CD4-positive, alpha-beta T cell (primary cell): ENCODE measurements at regions of chr14 and their contacts with region 1.

Region 1: DNA sequence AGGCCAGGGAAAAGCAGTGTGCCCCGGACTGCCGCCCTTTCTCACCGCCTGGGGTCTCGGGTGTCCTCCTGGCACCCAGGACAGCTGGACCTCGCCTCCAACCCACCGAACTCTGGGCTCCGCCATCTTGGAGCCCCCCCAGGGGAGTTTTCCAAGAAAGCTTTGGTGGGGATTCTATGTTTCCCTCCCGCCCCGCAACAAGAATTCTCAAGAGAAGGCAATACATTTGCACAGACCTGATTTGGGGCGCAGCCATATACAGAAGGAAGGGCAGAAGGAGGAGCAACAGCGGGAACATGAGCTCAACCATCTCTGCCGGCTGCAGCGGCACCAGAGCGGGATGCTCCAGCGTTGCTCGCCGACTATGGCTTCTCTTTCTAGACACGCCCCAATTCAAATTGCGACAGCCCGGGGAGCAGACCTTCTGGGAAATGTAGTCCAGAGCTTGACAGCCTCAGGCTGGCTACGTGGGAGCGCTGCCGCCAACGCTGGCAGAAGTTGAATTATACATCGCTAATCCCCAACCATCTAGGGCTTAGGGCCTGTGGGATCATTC is at the start of gene RDH11:
- DNase-seq: peak; percentile 63 to 94 (median 76)
- ATAC-seq: peak; percentile 96
- H3K4me3 ChIP-seq: peak within 1 kb of the TSS; percentile 87
- H3K4me3 Mint-ChIP-seq: peak within 1 kb of the TSS; percentile 88
- H3K27ac ChIP-seq: peak within 1 kb of the TSS; percentile 44 to 64
- H3K27ac Mint-ChIP-seq: peak within 1 kb of the TSS; percentile 74
- H3K4me1 ChIP-seq: peaks cover 14% of the 10 kb centered on the region
- H3K4me1 Mint-ChIP-seq: peaks cover 27% of the 10 kb centered on the region
- H3K27me3 ChIP-seq: no peaks in the 10 kb centered on the region
- H3K27me3 Mint-ChIP-seq: no peaks in the 10 kb centered on the region
- CTCF ChIP-seq: no peak
- total RNA-seq, gene RDH11: 13.6 to 14.2 TPM

Region 2: GRCh38 chr14:66507722-66508546 is 1187.5 kb before region 1 on chr14 and contains the start of gene GPHN:
- CTCF ChIA-PET with region 1: no interaction called
- POLR2A ChIA-PET with region 1: no interaction called
- intact Hi-C with region 1: loop called in 1 of 2 experiments (anchors 10 kb)
- DNase-seq: peak; percentile 71 to 95 (median 82)
- ATAC-seq: peak; percentile 89
- H3K4me3 ChIP-seq: peak within 1 kb of the TSS; percentile 90
- H3K4me3 Mint-ChIP-seq: peak within 1 kb of the TSS; percentile 99
- H3K27ac ChIP-seq: peak within 1 kb of the TSS; percentile 14 to 48
- H3K27ac Mint-ChIP-seq: peak within 1 kb of the TSS; percentile 94
- H3K4me1 ChIP-seq: peaks cover 19% of the 10 kb centered on the region
- H3K4me1 Mint-ChIP-seq: peaks cover 41% of the 10 kb centered on the region
- H3K27me3 ChIP-seq: no peaks in the 10 kb centered on the region
- H3K27me3 Mint-ChIP-seq: no peaks in the 10 kb centered on the region
- CTCF ChIP-seq: no peak
- total RNA-seq, gene GPHN: 10.0 to 10.7 TPM

Region 3: DNA sequence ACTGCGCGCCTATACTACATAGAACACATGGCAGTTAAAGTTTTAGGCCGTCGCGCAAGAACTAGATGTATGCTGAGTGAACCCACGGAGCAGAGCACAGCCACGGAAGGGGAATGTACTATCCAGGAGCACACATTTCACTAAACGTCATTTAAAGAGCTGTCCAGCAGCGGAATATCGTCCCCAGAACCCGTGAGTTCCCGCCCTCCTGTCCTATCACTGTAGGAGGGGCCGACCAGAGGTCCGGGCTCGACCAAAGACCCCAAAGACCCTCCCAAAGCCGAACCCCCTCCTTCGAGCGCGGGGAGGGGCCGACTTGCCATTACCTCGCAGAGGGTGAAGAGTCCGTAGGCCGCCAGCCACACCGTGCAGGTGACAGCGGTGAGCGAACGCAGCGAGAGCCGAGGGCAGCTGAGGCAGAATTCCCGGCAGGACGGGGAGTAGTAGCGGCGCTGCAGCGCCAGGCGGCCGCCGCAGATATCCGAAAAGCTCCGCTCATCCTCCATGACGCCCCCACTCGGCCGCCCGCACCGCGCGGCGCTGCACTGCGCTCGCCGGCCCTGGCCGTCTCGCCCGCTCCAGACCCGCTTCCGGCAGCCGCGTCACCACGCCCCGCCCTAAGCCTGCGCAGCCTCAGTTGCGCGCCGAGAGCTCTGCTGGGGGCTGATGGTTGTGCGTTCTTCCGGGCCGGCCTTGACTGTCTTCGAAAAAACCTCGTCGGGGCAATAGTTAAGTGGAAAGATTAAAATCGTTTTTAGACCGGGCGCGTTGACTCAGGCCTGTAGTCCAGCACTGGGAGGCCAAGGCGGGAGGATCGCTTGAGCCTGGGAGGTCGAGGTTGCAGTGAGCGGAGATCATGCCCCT is 95.5 kb before region 1 on chr14 and contains the start of gene PIGH:
- CTCF ChIA-PET with region 1: interaction called, 9 read pairs
- POLR2A ChIA-PET with region 1: interaction called, 26 read pairs
- intact Hi-C with region 1: loop called (anchors 1 to 5 kb)
- DNase-seq: peak; percentile 87 to 97 (median 94)
- ATAC-seq: peak; percentile 95
- H3K4me3 ChIP-seq: peak within 1 kb of the TSS; percentile 98
- H3K4me3 Mint-ChIP-seq: peak within 1 kb of the TSS; percentile 92
- H3K27ac ChIP-seq: peak within 1 kb of the TSS; percentile 56 to 83
- H3K27ac Mint-ChIP-seq: peak within 1 kb of the TSS; percentile 82
- H3K4me1 ChIP-seq: peaks cover 24% of the 10 kb centered on the region
- H3K4me1 Mint-ChIP-seq: peaks cover 49% of the 10 kb centered on the region
- H3K27me3 ChIP-seq: no peaks in the 10 kb centered on the region
- H3K27me3 Mint-ChIP-seq: no peaks in the 10 kb centered on the region
- CTCF ChIP-seq: peak; percentile 75
- total RNA-seq, gene PIGH: 66.0 to 69.7 TPM

Region 4: DNA sequence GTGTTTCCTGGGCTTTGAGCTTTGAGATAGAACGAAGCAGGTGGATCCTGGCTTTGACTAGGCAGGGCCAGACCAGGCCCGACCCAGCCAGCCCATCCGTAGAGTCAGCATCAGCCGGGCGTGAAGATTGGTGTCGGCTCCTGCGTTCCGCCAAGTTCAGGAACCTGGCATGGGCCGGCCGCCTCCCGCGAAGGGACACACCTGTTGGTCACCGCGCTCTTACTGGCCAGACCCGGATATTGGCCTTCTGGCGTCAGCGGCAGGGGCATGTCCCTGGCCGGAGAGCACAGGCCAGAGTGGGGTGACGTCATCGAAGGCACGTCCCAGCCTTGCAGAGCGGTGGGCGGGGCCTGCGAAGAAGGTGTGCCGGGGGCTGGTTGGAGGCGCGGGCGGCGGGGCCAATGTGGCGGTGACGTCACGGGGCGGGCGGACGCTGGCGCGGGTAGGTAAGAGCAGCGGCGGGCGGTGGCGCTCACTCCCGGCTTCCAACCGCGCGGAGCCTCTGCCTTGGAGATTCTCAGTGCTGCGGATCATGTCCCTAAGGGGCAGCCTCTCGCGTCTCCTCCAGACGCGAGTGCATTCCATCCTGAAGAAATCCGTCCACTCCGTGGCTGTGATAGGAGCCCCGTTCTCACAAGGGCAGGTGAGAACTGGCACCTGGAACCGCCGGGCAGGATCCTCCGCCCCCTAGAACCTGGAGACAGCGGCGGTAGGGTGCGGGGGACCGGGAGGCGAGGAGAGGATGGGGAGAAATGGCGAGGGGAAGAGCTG is 75.8 kb before region 1 on chr14 and contains the start of gene ARG2:
- CTCF ChIA-PET with region 1: interaction called, 6 read pairs
- POLR2A ChIA-PET with region 1: interaction called, 12 read pairs
- intact Hi-C with region 1: loop called (anchors 2 kb)
- DNase-seq: peak; percentile 92 to 99 (median 97)
- ATAC-seq: peak; percentile 90
- H3K4me3 ChIP-seq: peak within 1 kb of the TSS; percentile 88
- H3K4me3 Mint-ChIP-seq: peak within 1 kb of the TSS; percentile 94
- H3K27ac ChIP-seq: peak within 1 kb of the TSS; percentile 83 to 86
- H3K27ac Mint-ChIP-seq: peak within 1 kb of the TSS; percentile 83
- H3K4me1 ChIP-seq: peaks cover 21% of the 10 kb centered on the region
- H3K4me1 Mint-ChIP-seq: peaks cover 44% of the 10 kb centered on the region
- H3K27me3 ChIP-seq: peaks cover 0 to 4% of the 10 kb centered on the region in 2 experiments
- H3K27me3 Mint-ChIP-seq: no peaks in the 10 kb centered on the region
- CTCF ChIP-seq: no peak
- total RNA-seq, gene ARG2: 3.7 to 3.9 TPM

Region 5: GRCh38 chr14:67674481-67675169 is 20.8 kb before region 1 on chr14 and contains the start of gene VTI1B:
- CTCF ChIA-PET with region 1: interaction called, 19 read pairs
- POLR2A ChIA-PET with region 1: interaction called, 42 read pairs
- intact Hi-C with region 1: loop called (anchors 1 to 2 kb)
- DNase-seq: peak; percentile 57 to 89 (median 72)
- ATAC-seq: peak; percentile 91
- H3K4me3 ChIP-seq: peak within 1 kb of the TSS; percentile 83
- H3K4me3 Mint-ChIP-seq: peak within 1 kb of the TSS; percentile 91
- H3K27ac ChIP-seq: peak within 1 kb of the TSS; percentile 92 to 95
- H3K27ac Mint-ChIP-seq: peak within 1 kb of the TSS; percentile 89
- H3K4me1 ChIP-seq: peaks cover 33% of the 10 kb centered on the region
- H3K4me1 Mint-ChIP-seq: peaks cover 43% of the 10 kb centered on the region
- H3K27me3 ChIP-seq: no peaks in the 10 kb centered on the region
- H3K27me3 Mint-ChIP-seq: no peaks in the 10 kb centered on the region
- CTCF ChIP-seq: no peak
- total RNA-seq, gene VTI1B: 24.4 to 27.0 TPM

Region 6: DNA sequence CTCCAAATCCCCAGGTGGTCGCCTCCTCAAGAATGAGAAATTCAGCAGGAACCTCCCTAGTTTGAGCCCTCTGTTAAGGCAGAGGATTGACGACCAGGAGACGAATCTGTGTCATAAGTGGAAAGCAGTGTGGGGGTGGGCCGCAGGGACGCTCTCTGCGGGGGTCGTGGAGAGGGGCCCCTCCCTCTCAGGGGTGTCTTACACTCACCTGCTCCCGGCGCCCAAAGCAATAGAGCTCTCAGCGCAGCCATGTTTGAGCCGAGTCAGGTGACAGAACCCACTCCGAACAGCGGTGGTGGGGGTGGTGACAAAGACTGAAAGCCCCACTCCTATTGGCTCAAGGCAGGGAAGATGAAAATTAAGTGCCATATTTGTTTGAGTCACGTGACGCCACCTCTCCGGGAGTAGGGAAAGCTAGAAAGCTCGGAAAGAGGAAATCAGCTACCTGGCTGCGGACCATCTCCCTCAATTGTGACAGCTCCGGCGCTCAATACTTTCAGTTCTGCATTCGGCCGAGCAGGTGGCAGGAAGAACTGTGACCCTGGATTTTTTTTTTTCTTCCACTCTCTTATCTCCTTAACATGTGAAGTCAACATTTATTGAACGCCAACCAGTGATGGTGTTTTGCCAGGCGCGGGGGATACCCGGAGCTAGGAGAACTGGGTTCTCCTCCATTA is 121.0 kb after region 1 on chr14 and contains the start of gene ZFYVE26:
- CTCF ChIA-PET with region 1: no interaction called
- POLR2A ChIA-PET with region 1: interaction called, 3 read pairs
- intact Hi-C with region 1: loop called in 1 of 2 experiments (anchors 5 kb)
- DNase-seq: peak; percentile 77 to 95 (median 82)
- ATAC-seq: peak; percentile 94
- H3K4me3 ChIP-seq: peak within 1 kb of the TSS; percentile 78
- H3K4me3 Mint-ChIP-seq: peak within 1 kb of the TSS; percentile 94
- H3K27ac ChIP-seq: peak within 1 kb of the TSS; percentile 67 to 74
- H3K27ac Mint-ChIP-seq: peak within 1 kb of the TSS; percentile 85
- H3K4me1 ChIP-seq: peaks cover 38% of the 10 kb centered on the region
- H3K4me1 Mint-ChIP-seq: peaks cover 68% of the 10 kb centered on the region
- H3K27me3 ChIP-seq: no peaks in the 10 kb centered on the region
- H3K27me3 Mint-ChIP-seq: no peaks in the 10 kb centered on the region
- CTCF ChIP-seq: no peak
- total RNA-seq, gene ZFYVE26: 20.5 to 23.2 TPM